ENCODE measurements at regions of chr3 and their contacts with region 1.

Region 1: DNA sequence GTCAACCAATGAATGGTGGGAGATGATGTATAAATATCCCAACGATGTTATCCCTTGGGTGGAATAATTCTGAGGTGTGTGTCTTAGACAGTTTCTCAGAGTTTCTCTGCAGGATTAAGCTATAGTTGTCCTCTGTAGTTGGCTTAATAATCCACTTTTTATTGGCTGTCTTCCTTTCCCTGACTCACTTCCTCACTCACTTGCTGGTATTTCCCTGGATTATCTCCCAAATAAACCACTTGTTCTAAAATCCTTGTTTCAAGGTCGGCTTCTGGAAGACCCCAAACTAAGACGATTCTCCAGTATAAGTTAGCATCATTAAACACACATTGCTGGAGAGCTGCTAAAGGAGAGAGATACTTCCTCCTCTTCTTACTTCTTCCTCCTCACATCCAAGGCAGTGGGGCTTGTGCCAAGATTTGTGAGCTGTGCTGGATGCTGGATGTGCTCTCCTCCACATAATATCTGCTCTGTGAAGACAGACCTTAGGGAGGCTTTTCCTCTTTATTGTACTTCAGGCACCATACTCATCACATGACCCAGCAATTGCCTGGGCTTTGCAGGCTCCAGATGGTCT is 22.5 kb upstream of the ROPN1 start:
- DNase-seq: no peak
- ATAC-seq: no peak
- H3K4me3 Mint-ChIP-seq: no peak overlapping the region
- H3K27ac Mint-ChIP-seq: no peak overlapping the region
- H3K4me1 Mint-ChIP-seq: no peaks in the 10 kb centered on the region
- H3K27me3 Mint-ChIP-seq: peaks cover 29% of the 10 kb centered on the region
- CTCF ChIP-seq: no peak

Region 2: GRCh38 chr3:124078953-124079911 is 64.8 kb after region 1 on chr3:
- CTCF ChIA-PET with region 1: interaction called, 13 read pairs
- POLR2A ChIA-PET with region 1: no interaction called
- intact Hi-C with region 1: loop called (anchors 5 kb)
- DNase-seq: peak; percentile 37
- ATAC-seq: no peak
- H3K4me3 Mint-ChIP-seq: no peak overlapping the region
- H3K27ac Mint-ChIP-seq: no peak overlapping the region
- H3K4me1 Mint-ChIP-seq: no peaks in the 10 kb centered on the region
- H3K27me3 Mint-ChIP-seq: peaks cover 11% of the 10 kb centered on the region
- CTCF ChIP-seq: peak; percentile 66